ENCODE measurements at regions of chr10 and their contacts with region 1.

Region 1: DNA sequence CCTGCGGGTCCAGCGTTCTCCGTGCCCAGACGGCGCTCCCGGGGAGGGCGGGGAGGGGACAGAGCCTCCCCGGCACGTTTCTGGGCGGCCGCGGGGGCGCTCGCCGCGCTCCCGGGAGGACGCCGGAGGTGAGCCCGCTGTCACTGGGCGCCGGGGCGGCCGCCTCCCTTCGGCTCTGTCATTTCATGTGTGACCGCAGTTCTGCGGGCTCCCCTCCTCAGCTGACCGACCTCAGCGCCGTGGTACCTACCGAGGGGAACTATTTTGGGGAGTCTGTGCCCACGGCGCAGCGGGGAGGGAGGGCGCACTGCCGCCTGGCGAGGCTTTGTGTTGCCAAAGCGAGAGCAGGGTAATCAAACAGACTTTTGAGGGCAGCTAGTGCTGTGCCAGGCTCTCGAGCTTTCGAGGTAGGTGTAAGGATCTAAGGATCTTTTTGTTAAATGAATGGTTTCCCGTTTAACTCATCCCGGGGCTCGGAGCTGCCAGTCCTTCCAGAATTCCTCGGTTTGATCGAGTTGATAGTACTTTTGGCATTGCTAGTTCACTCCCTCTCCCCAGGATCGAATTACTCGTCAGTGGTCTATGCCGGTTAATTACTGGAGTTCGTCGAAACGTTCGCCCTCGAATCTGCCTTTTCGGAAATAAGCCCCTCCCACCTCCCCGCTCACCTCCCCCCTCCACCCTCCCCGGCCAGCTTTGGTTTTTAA is 1.9 kb downstream of the ARID5B start:
- DNase-seq: peak; percentile 46 to 80 (median 79)
- ATAC-seq: peak; percentile 79 to 81
- H3K4me3 ChIP-seq: peak overlapping the region; percentile 84
- H3K27ac ChIP-seq: peak overlapping the region; percentile 97
- H3K4me1 ChIP-seq: no peaks in the 10 kb centered on the region
- H3K27me3 ChIP-seq: no peaks in the 10 kb centered on the region

Region 2: GRCh38 chr10:61992671-61993668 is 89.6 kb after region 1 on chr10:
- intact Hi-C with region 1: loop called in 1 of 4 experiments (anchors 10 kb)
- DNase-seq: peak; percentile 30 to 35 (median 33)
- ATAC-seq: peak; percentile 96 to 97
- H3K4me3 ChIP-seq: peak overlapping the region; percentile 42
- H3K27ac ChIP-seq: peak overlapping the region; percentile 81
- H3K4me1 ChIP-seq: peaks cover 8% of the 10 kb centered on the region
- H3K27me3 ChIP-seq: no peaks in the 10 kb centered on the region

Region 3: GRCh38 chr10:62038609-62039190 is 135.3 kb after region 1 on chr10:
- intact Hi-C with region 1: loop called in 2 of 4 experiments (anchors 5 to 10 kb)
- DNase-seq: peak; percentile 66 to 84 (median 75)
- ATAC-seq: peak; percentile 64 to 67
- H3K4me3 ChIP-seq: peak overlapping the region; percentile 35
- H3K27ac ChIP-seq: no peak overlapping the region
- H3K4me1 ChIP-seq: no peaks in the 10 kb centered on the region
- H3K27me3 ChIP-seq: no peaks in the 10 kb centered on the region

Region 4: GRCh38 chr10:62050893-62051433 is 147.6 kb after region 1 on chr10:
- intact Hi-C with region 1: loop called in 1 of 4 experiments (anchors 5 kb)
- DNase-seq: peak; percentile 55 to 70 (median 63)
- ATAC-seq: peak; percentile 70 to 78
- H3K4me3 ChIP-seq: peak overlapping the region; percentile 93
- H3K27ac ChIP-seq: peak overlapping the region; percentile 96
- H3K4me1 ChIP-seq: peaks cover 20% of the 10 kb centered on the region
- H3K27me3 ChIP-seq: no peaks in the 10 kb centered on the region

Region 5: GRCh38 chr10:62244780-62245467 is 341.6 kb after region 1 on chr10:
- intact Hi-C with region 1: loop called in 3 of 4 experiments (anchors 5 to 10 kb)
- DNase-seq: no peak
- ATAC-seq: peak; percentile 75 to 81
- H3K4me3 ChIP-seq: no peak overlapping the region
- H3K27ac ChIP-seq: no peak overlapping the region
- H3K4me1 ChIP-seq: no peaks in the 10 kb centered on the region
- H3K27me3 ChIP-seq: no peaks in the 10 kb centered on the region